Heart right ventricle (tissue), 16 donors: ENCODE measurements at regions of chr18 and their contacts with region 1.

Region 1: GRCh38 chr18:42114310-42114943 is 159.4 kb downstream of the PIK3C3 start:
- DNase-seq: peak; percentile 11 to 76
- ATAC-seq: peak in 7 of 8 donors; percentile 77 to 90 (median 87)
- H3K4me3 ChIP-seq: no peak overlapping the region
- H3K27ac ChIP-seq: peak overlapping the region in 3 of 10 donors; percentile 5 to 41 (median 24)
- H3K4me1 ChIP-seq: peaks cover 0 to 17% (median 7%) of the 10 kb centered on the region in 9 donors
- H3K27me3 ChIP-seq: no peaks in the 10 kb centered on the region
- CTCF ChIP-seq: peak; percentile 84 to 93 (median 89)

Region 2: DNA sequence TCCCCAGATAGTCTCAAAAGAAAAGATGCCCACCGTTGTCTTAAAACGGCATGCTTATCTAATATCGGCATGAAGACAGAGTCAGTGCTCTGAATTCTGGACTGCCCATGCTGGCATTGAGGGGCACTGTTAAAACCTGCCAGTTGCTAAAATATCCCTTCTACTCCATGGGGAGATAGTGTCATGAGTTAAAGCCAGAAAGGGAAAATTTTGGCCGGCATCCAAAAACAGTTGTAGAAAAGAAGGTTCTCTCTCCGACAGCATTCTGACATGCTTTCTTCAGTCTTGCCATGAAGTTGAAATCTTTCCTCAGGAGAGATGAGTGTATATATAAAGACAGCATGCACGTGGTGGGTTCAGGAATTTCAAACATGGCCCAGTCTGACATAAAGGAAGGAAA is 560.7 kb before region 1 on chr18:
- intact Hi-C with region 1: no loop called
- DNase-seq: peak in 1 of 2 donors; percentile 20
- ATAC-seq: peak in 2 of 8 donors; percentile 39 to 52
- H3K4me3 ChIP-seq: no peak overlapping the region
- H3K27ac ChIP-seq: no peak overlapping the region
- H3K4me1 ChIP-seq: peaks cover 0 to 7% (median 0%) of the 10 kb centered on the region in 9 donors
- H3K27me3 ChIP-seq: no peaks in the 10 kb centered on the region
- CTCF ChIP-seq: no peak

Region 3: GRCh38 chr18:42028247-42028832 is 86.1 kb before region 1 on chr18:
- intact Hi-C with region 1: no loop called
- DNase-seq: no peak
- ATAC-seq: no peak
- H3K4me3 ChIP-seq: no peak overlapping the region
- H3K27ac ChIP-seq: no peak overlapping the region
- H3K4me1 ChIP-seq: no peaks in the 10 kb centered on the region
- H3K27me3 ChIP-seq: no peaks in the 10 kb centered on the region
- CTCF ChIP-seq: peak; percentile 22 to 83 (median 72)

Region 4: DNA sequence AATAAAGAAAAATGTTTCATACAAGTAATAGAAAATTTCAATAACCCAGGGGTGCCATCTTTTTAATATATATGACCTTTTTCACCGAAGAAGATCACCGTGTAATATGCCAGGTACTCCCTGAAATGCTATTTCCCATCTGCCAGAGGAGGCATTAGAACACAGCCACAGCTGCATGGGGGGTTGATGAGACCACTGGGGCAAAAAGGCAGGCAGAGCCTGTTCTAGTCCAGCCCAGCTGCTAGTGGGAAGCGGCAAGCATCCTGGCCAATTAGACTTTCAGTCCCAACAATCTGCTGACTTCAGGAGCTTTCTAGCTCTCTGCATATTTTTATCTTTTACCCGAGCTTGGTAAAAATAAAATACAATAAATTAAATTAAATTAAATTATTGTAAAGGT is 638.5 kb after region 1 on chr18:
- intact Hi-C with region 1: loop called in 1 of 10 experiments (anchors 5 kb)
- DNase-seq: no peak
- ATAC-seq: no peak
- H3K4me3 ChIP-seq: no peak overlapping the region
- H3K27ac ChIP-seq: no peak overlapping the region
- H3K4me1 ChIP-seq: no peaks in the 10 kb centered on the region
- H3K27me3 ChIP-seq: no peaks in the 10 kb centered on the region
- CTCF ChIP-seq: no peak

Region 5: DNA sequence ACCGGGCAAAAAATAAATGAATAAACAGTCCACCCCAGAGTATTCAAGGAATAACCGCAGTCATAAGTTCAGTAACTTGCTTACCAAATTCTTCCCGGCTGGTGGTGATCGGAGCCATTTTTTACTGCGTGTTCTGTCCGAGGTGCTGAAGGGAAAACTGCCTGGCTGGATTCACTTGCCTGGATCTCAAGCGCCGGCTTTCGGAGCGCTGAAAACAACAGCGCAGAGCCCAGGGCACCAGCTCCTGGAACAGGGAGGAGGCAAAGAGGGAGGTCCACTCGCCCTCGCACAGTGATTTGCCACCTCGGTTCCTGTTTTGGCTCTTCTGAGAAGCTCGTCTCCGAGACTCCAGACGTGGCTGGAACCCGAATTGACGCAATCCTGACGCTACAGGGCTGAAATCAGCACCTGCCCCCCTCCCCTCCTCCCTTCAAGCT is 1162.8 kb after region 1 on chr18 and contains the start of gene SYT4:
- intact Hi-C with region 1: loop called in 7 of 10 experiments (anchors 2 to 10 kb)
- DNase-seq: peak; percentile 13 to 49
- ATAC-seq: peak in 5 of 8 donors; percentile 29 to 70 (median 62)
- H3K4me3 ChIP-seq: no peak within 1 kb of the TSS
- H3K27ac ChIP-seq: no peak within 1 kb of the TSS
- H3K4me1 ChIP-seq: no peaks in the 10 kb centered on the region
- H3K27me3 ChIP-seq: peaks cover 0 to 26% (median 16%) of the 10 kb centered on the region in 7 donors
- CTCF ChIP-seq: no peak
- total RNA-seq, gene SYT4: 1.1 TPM in 1 of 10 donors, not detected in the others

Region 6: DNA sequence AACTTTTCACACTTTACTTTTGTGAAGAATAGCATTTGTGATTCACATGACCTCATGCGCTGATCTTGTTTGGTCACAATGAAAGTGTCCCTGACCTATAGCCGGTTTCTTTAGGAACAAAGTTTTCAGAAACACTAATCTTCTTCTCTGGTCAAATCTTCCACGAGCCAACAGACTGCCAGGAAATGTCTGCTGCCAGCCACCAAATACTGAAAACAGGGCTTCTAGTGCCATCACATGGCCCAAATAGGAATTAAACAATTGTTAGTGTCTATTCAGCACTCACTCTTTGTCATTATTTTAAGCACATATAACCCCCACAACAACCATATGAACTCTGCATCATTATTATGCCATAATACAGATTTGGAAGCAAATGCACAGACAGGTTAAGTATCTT is 1449.4 kb after region 1 on chr18:
- intact Hi-C with region 1: loop called in 4 of 10 experiments (anchors 10 kb)
- DNase-seq: peak in 1 of 2 donors; percentile 11
- ATAC-seq: peak in 2 of 8 donors; percentile 42 to 70
- H3K4me3 ChIP-seq: no peak overlapping the region
- H3K27ac ChIP-seq: no peak overlapping the region
- H3K4me1 ChIP-seq: peaks cover 0 to 5% (median 0%) of the 10 kb centered on the region in 9 donors
- H3K27me3 ChIP-seq: peaks cover 0 to 16% (median 0%) of the 10 kb centered on the region in 7 donors
- CTCF ChIP-seq: peak in 8 of 9 donors; percentile 25 to 61 (median 48)